Colonic mucosa (tissue), 4 donors: ENCODE measurements at regions of chr6 and their contacts with region 1.

Region 1: GRCh38 chr6:20291764-20292580 is 79.7 kb upstream of the MBOAT1 start:
- DNase-seq: peak; percentile 88
- H3K4me3 ChIP-seq: no peak overlapping the region
- H3K27ac ChIP-seq: no peak overlapping the region
- H3K4me1 ChIP-seq: no peaks in the 10 kb centered on the region
- H3K27me3 ChIP-seq: no peaks in the 10 kb centered on the region
- CTCF ChIP-seq: peak; percentile 95

Region 2: DNA sequence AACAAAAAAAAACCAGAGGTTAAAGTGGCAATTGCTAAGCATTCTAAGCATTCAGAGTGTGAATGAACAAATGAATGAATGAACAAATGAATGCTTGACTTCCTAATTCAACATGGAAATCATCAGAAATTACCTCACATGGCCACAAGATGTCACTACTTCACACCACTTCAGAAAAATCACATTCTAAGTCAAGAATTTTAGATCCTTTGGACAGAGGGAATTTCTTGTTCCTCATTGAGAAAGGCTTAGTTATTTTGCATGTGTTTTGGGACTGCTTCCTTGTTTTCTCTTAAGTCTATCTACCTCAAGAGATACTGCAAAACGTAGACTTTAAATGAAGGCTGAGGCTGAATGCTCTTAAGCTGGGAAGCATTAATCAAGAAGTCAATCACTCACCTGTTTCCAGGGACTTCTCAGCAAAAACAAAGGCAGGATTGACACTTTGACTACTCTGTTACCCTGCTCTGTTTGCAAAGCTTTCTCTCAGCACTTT is 199.9 kb before region 1 on chr6:
- intact Hi-C with region 1: loop called (anchors 5 kb)
- DNase-seq: no peak
- H3K4me3 ChIP-seq: no peak overlapping the region
- H3K27ac ChIP-seq: no peak overlapping the region
- H3K4me1 ChIP-seq: no peaks in the 10 kb centered on the region
- H3K27me3 ChIP-seq: no peaks in the 10 kb centered on the region
- CTCF ChIP-seq: peak; percentile 67

Region 3: DNA sequence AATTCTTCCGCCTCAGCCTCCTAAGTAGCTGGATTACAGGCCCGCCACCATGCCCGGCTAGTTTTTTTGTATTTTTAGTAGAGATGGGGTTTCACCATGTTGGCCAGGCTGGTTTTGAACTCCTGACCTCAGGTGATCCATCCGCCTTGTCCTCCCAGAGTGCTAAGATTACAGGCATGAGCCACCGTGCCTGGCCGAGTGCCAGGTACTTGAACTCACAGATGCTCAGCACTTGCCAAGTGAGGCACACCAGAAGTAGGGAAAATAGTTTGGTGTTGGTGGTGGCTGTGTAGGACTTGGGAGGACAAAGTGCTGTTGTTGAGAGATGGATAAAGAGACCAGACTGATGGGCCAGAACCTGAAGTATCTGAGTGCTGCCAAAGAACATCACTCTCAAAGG is 39.7 kb before region 1 on chr6:
- intact Hi-C with region 1: no loop called
- DNase-seq: no peak
- H3K4me3 ChIP-seq: no peak overlapping the region
- H3K27ac ChIP-seq: peak overlapping the region; percentile 34
- H3K4me1 ChIP-seq: peaks cover 5% of the 10 kb centered on the region
- H3K27me3 ChIP-seq: no peaks in the 10 kb centered on the region
- CTCF ChIP-seq: no peak

Region 4: GRCh38 chr6:20399518-20399917 is 107.5 kb after region 1 on chr6:
- intact Hi-C with region 1: loop called (anchors 10 kb)
- DNase-seq: no peak
- H3K4me3 ChIP-seq: no peak overlapping the region
- H3K27ac ChIP-seq: no peak overlapping the region
- H3K4me1 ChIP-seq: no peaks in the 10 kb centered on the region
- H3K27me3 ChIP-seq: no peaks in the 10 kb centered on the region
- CTCF ChIP-seq: no peak